H1 (cell line): ENCODE measurements at regions of chr9 and their contacts with region 1.

Region 1: DNA sequence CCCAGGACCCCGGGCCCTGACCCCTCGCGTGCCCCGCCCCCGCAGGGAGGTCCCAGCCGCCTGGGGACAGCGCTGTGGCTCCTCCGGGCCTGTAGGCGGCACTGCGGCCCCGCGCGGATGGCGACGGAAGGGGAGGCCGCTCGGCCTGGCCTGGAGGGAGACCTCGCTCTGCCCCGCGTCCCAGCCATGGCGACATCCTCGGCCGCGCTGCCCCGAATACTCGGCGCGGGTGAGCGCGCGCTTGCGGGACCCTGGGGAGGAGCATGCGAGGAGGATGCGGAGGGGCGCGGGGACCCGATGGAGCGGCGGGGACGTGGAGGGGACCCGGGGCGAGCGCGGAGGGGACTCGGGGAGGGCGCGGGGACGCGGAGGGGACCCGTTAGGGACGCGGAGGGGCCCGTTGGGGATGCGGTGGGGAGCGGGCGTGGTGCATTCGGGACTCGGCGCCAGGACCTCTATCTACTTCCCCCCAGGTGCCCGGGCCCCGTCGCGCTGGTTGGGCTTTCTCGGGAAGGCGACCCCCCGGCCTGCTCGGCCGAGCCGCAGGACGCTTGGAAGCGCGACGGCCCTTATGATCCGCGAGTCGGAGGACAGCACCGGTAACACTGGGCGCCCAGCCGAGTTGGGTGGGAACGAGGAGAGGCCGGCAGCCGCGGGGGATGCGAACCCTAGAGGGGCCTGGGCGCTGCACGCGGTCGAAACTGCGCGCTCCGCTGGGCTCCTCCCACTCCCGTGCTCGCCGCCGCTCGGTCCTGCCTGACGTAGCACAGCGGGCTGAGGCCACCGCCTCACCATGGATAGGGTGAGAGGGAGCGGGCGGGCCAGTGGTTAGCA is at the start of gene MRPS2:
- DNase-seq: peak; percentile 62 to 96
- H3K4me3 ChIP-seq: peak within 1 kb of the TSS; percentile 61 to 86 (median 81)
- H3K27ac ChIP-seq: peak within 1 kb of the TSS; percentile 60; the same call in 1 of the 2 replicates
- H3K4me1 ChIP-seq: peaks cover 0 to 15% (median 12%) of the 10 kb centered on the region in 4 experiments; a peak in 6 of 7 replicates
- H3K27me3 ChIP-seq: no peaks in the 10 kb centered on the region; a peak in 1 of 7 replicates
- CTCF ChIP-seq: peak in 2 of 3 experiments; percentile 85 to 87; a peak in 3 of 4 replicates
- EP300 ChIP-seq: no peak
- POLR2A ChIP-seq: peak in 1 of 2 experiments; percentile 64; a peak in 2 of 3 replicates
- RAD21 ChIP-seq: peak; percentile 30 to 51; a peak in 3 of 4 replicates
- total RNA-seq, gene MRPS2: 78.6 and 78.8 TPM in 2 replicates

Region 2: GRCh38 chr9:135355521-135356011 is 145.2 kb before region 1 on chr9:
- CTCF ChIA-PET with region 1: no interaction called
- POLR2A ChIA-PET with region 1: no interaction called
- DNase-seq: no peak
- H3K4me3 ChIP-seq: no peak overlapping the region
- H3K27ac ChIP-seq: no peak overlapping the region
- H3K4me1 ChIP-seq: peaks cover 0 to 4% (median 0%) of the 10 kb centered on the region in 4 experiments; a peak in 2 of 7 replicates
- H3K27me3 ChIP-seq: no peaks in the 10 kb centered on the region
- CTCF ChIP-seq: no peak
- EP300 ChIP-seq: no peak
- POLR2A ChIP-seq: no peak
- RAD21 ChIP-seq: no peak

Region 3: DNA sequence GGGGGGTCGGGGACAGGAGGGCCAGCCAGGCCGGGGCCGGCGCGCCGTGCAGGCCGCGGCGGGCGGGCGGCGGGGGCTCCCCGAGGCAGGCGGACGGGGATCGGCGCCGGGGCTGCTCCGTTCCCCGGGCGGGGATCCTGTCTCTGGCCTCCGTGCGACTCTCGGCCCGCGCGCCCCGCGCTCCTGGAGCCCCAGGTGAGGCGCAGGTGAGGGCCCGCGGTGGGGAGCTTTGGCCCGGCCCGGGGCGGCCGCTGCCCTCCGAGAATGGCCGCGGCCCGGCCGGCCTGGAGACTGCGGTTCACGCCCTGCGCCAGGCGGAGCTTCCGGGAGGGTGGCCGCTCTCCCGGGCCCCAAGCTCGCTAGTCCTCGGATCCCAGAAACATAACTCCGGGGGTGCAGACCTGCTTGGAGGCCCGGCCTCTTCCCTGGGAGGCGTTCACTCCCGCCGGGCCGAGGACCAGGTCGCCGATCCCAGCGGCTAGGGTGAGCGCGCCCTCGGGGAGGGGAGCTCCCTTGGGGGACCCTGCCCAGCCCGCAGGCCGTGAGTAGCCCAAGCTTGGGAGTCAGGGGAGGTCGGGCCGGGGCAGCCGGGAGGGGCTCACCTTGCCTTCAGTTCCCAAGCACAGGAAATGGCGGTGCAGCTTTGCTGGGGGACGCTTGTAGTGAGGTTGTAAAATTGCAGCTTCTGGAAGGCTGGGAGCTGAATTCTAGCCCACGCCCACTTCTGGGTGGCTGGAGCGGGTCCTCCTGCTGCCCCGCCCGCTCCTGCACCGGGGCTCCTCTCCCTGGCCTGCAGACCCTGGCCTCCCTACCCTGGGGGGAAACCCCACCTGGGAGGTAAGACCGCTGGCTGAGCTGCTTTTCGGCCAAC is 20.4 kb before region 1 on chr9:
- CTCF ChIA-PET with region 1: interaction called, 9 read pairs
- POLR2A ChIA-PET with region 1: interaction called, 17 read pairs
- DNase-seq: peak in 1 of 2 experiments; percentile 69
- H3K4me3 ChIP-seq: peak overlapping the region; percentile 65 to 93 (median 80)
- H3K27ac ChIP-seq: no peak overlapping the region; the same call in 1 of the 2 replicates
- H3K4me1 ChIP-seq: peaks cover 0 to 8% (median 3%) of the 10 kb centered on the region in 4 experiments; a peak in 6 of 7 replicates
- H3K27me3 ChIP-seq: no peaks in the 10 kb centered on the region
- CTCF ChIP-seq: no peak
- EP300 ChIP-seq: no peak
- POLR2A ChIP-seq: no peak
- RAD21 ChIP-seq: no peak

Region 4: GRCh38 chr9:135524130-135524861 is 23.6 kb after region 1 on chr9:
- CTCF ChIA-PET with region 1: interaction called, 14 read pairs
- POLR2A ChIA-PET with region 1: no interaction called
- DNase-seq: peak in 1 of 2 experiments; percentile 45
- H3K4me3 ChIP-seq: no peak overlapping the region
- H3K27ac ChIP-seq: no peak overlapping the region
- H3K4me1 ChIP-seq: peaks cover 0 to 12% (median 6%) of the 10 kb centered on the region in 4 experiments; a peak in 5 of 7 replicates
- H3K27me3 ChIP-seq: no peaks in the 10 kb centered on the region
- CTCF ChIP-seq: no peak
- EP300 ChIP-seq: no peak
- POLR2A ChIP-seq: no peak
- RAD21 ChIP-seq: no peak